CD4-positive, alpha-beta memory T cell (primary cell): ENCODE measurements at regions of chr17 and their contacts with region 1.

Region 1: GRCh38 chr17:64025732-64026294 is 5.4 kb upstream of the ICAM2 start:
- DNase-seq: peak; percentile 95 to 98 (median 96)
- H3K4me3 ChIP-seq: peak overlapping the region in 1 of 2 donors; percentile 43
- H3K4me3 Mint-ChIP-seq: peak overlapping the region; percentile 71 to 94 (median 87)
- H3K27ac ChIP-seq: peak overlapping the region; percentile 89
- H3K27ac Mint-ChIP-seq: peak overlapping the region; percentile 94 to 99 (median 98)
- H3K4me1 ChIP-seq: peaks cover 80% of the 10 kb centered on the region
- H3K4me1 Mint-ChIP-seq: peaks cover 42 to 75% (median 59%) of the 10 kb centered on the region in 4 donors
- H3K27me3 ChIP-seq: no peaks in the 10 kb centered on the region
- H3K27me3 Mint-ChIP-seq: no peaks in the 10 kb centered on the region

Region 2: DNA sequence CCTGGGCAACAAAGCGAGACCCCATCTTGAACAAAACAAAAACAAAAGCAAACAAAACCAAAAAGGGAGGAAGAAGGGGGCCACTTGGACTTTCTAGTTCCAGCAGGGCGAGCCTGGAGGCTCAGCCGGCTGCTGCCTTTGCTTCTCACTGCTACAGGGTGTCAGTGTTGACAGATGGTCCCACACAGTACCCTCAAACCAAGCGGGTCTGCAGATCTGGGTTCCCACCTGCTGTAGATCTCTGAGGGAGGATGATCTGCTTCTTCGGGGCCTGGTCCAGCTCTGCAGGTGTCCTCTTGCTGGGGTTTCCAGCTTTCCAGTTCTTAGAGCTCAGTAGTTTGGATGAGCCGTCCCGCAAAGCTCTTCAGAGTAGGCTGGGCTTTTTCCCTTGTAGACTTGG is 121.5 kb before region 1 on chr17:
- CTCF ChIA-PET with region 1: interaction called, 14 read pairs
- POLR2A ChIA-PET with region 1: no interaction called
- intact Hi-C with region 1: no loop called
- DNase-seq: no peak
- H3K4me3 ChIP-seq: no peak overlapping the region
- H3K4me3 Mint-ChIP-seq: no peak overlapping the region
- H3K27ac ChIP-seq: no peak overlapping the region
- H3K27ac Mint-ChIP-seq: peak overlapping the region in 1 of 7 donors; percentile 47
- H3K4me1 ChIP-seq: no peaks in the 10 kb centered on the region
- H3K4me1 Mint-ChIP-seq: peaks cover 3 to 8% (median 4%) of the 10 kb centered on the region in 4 donors
- H3K27me3 ChIP-seq: no peaks in the 10 kb centered on the region
- H3K27me3 Mint-ChIP-seq: peaks cover 2 to 3% of the 10 kb centered on the region in 2 donors

Region 3: DNA sequence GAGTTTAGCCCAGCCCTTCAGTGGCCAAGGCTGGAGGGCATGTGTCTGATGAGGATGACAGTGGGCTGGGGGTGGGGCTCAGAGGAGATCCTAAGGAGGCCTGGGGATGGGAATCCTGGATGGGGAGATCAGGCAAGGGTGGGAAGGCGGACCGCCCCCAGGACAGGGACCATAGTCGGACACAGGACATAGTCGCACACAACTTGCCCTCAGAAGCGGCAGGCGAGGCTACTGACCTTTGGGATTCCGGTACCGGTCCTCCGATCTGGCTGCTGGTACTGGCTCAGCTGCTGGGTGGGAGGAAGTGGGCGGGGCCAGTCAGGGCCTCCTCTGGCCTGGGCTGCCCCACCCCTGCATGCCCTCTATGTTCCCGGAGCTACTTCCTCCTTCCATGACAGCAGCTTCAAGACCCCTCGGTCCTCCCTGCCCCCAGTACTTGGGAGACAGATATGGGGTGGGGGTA is 94.7 kb before region 1 on chr17:
- CTCF ChIA-PET with region 1: interaction called, 19 read pairs
- POLR2A ChIA-PET with region 1: interaction called, 23 read pairs
- intact Hi-C with region 1: no loop called
- DNase-seq: peak; percentile 43 to 66 (median 49)
- H3K4me3 ChIP-seq: peak overlapping the region; percentile 48 to 51
- H3K4me3 Mint-ChIP-seq: peak overlapping the region; percentile 92 to 98 (median 94)
- H3K27ac ChIP-seq: peak overlapping the region; percentile 71
- H3K27ac Mint-ChIP-seq: peak overlapping the region; percentile 48 to 96 (median 94)
- H3K4me1 ChIP-seq: peaks cover 25% of the 10 kb centered on the region
- H3K4me1 Mint-ChIP-seq: peaks cover 7 to 32% (median 22%) of the 10 kb centered on the region in 4 donors
- H3K27me3 ChIP-seq: no peaks in the 10 kb centered on the region
- H3K27me3 Mint-ChIP-seq: no peaks in the 10 kb centered on the region

Region 4: GRCh38 chr17:63998050-63998720 is 27.6 kb before region 1 on chr17 and contains the start of gene PRR29:
- CTCF ChIA-PET with region 1: interaction called, 556 read pairs
- POLR2A ChIA-PET with region 1: interaction called, 587 read pairs
- intact Hi-C with region 1: loop called (anchors 1 kb)
- DNase-seq: peak; percentile 70 to 81 (median 75)
- H3K4me3 ChIP-seq: peak within 1 kb of the TSS; percentile 5 to 76
- H3K4me3 Mint-ChIP-seq: peak within 1 kb of the TSS; percentile 87 to 94 (median 88)
- H3K27ac ChIP-seq: peak within 1 kb of the TSS; percentile 39
- H3K27ac Mint-ChIP-seq: peak within 1 kb of the TSS; percentile 60 to 91 (median 87)
- H3K4me1 ChIP-seq: peaks cover 46% of the 10 kb centered on the region
- H3K4me1 Mint-ChIP-seq: peaks cover 32 to 69% (median 42%) of the 10 kb centered on the region in 4 donors
- H3K27me3 ChIP-seq: no peaks in the 10 kb centered on the region
- H3K27me3 Mint-ChIP-seq: no peaks in the 10 kb centered on the region
- total RNA-seq, gene PRR29: 0.19 to 1.0 TPM

Region 5: DNA sequence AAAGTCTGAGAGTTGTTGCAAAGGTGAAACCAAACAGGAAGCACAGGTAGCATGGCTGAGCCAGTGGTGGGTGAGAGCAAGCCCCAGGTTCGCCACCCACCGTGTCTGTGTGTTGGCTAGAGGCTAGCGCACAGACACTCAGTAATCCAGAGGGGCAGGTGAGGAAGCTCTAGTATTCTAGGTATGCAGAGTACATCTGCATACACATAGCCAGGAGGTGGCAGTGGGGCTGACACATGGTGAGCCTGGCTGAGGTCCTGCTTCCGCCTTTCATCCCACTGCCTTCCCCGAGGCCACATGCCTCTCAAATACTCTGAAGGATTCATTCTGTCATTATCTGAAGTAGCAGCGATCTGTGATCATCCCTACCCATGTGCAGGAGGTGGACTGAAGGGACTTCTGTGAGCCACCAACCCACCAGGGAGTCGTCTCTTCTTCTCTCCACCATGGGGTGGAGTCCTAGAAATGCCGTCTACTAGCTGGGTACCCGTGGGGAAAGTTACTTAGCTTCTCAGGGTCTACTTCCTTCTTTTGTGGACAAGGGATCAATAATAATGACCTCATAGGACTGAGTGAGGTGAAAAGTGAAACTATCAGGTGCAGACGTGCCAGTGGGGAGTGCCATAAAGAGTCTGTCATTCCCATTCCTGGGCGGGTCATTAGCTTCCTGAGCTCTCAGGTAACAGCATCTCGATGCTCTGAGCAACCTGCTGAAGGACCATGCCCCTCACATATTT is 30.6 kb after region 1 on chr17:
- CTCF ChIA-PET with region 1: interaction called, 110 read pairs
- POLR2A ChIA-PET with region 1: interaction called, 40 read pairs
- intact Hi-C with region 1: loop called (anchors 2 kb)
- DNase-seq: peak in 1 of 5 donors; percentile 40
- H3K4me3 ChIP-seq: no peak overlapping the region
- H3K4me3 Mint-ChIP-seq: peak overlapping the region in 6 of 8 donors; percentile 26 to 69 (median 60)
- H3K27ac ChIP-seq: peak overlapping the region; percentile 14
- H3K27ac Mint-ChIP-seq: peak overlapping the region; percentile 42 to 93 (median 91)
- H3K4me1 ChIP-seq: peaks cover 62% of the 10 kb centered on the region
- H3K4me1 Mint-ChIP-seq: peaks cover 39 to 94% (median 65%) of the 10 kb centered on the region in 4 donors
- H3K27me3 ChIP-seq: no peaks in the 10 kb centered on the region
- H3K27me3 Mint-ChIP-seq: no peaks in the 10 kb centered on the region

Region 6: GRCh38 chr17:64158831-64159590 is 133.2 kb after region 1 on chr17:
- CTCF ChIA-PET with region 1: no interaction called
- POLR2A ChIA-PET with region 1: no interaction called
- intact Hi-C with region 1: no loop called
- DNase-seq: no peak
- H3K4me3 ChIP-seq: no peak overlapping the region
- H3K4me3 Mint-ChIP-seq: no peak overlapping the region
- H3K27ac ChIP-seq: no peak overlapping the region
- H3K27ac Mint-ChIP-seq: peak overlapping the region in 1 of 7 donors; percentile 70
- H3K4me1 ChIP-seq: peaks cover 5% of the 10 kb centered on the region
- H3K4me1 Mint-ChIP-seq: peaks cover 0 to 6% (median 2%) of the 10 kb centered on the region in 4 donors
- H3K27me3 ChIP-seq: no peaks in the 10 kb centered on the region
- H3K27me3 Mint-ChIP-seq: no peaks in the 10 kb centered on the region

Region 7: GRCh38 chr17:64281962-64282727 is 256.3 kb after region 1 on chr17:
- CTCF ChIA-PET with region 1: interaction called, 7 read pairs
- POLR2A ChIA-PET with region 1: no interaction called
- intact Hi-C with region 1: loop called (anchors 5 kb)
- DNase-seq: peak; percentile 42 to 57 (median 48)
- H3K4me3 ChIP-seq: no peak overlapping the region
- H3K4me3 Mint-ChIP-seq: no peak overlapping the region
- H3K27ac ChIP-seq: no peak overlapping the region
- H3K27ac Mint-ChIP-seq: no peak overlapping the region
- H3K4me1 ChIP-seq: no peaks in the 10 kb centered on the region
- H3K4me1 Mint-ChIP-seq: peaks cover 0 to 2% (median 0%) of the 10 kb centered on the region in 4 donors
- H3K27me3 ChIP-seq: no peaks in the 10 kb centered on the region
- H3K27me3 Mint-ChIP-seq: no peaks in the 10 kb centered on the region